ENCODE measurements at regions of chr4 and their contacts with region 1.

Region 1: GRCh38 chr4:6783053-6783981 is 790 bp downstream of the KIAA0232 start:
- DNase-seq: peak; percentile 59 to 91
- H3K4me3 ChIP-seq: peak overlapping the region; percentile 94
- H3K27ac ChIP-seq: peak overlapping the region; percentile 75
- H3K4me1 ChIP-seq: peaks cover 41% of the 10 kb centered on the region
- H3K27me3 ChIP-seq: no peaks in the 10 kb centered on the region
- CTCF ChIP-seq: no peak

Region 2: GRCh38 chr4:5051278-5052203 is 1731.8 kb before region 1 on chr4 and contains the start of gene STK32B:
- CTCF ChIA-PET with region 1: no interaction called
- POLR2A ChIA-PET with region 1: no interaction called
- intact Hi-C with region 1: no loop called
- DNase-seq: no peak
- H3K4me3 ChIP-seq: no peak within 1 kb of the TSS
- H3K27ac ChIP-seq: no peak within 1 kb of the TSS
- H3K4me1 ChIP-seq: no peaks in the 10 kb centered on the region
- H3K27me3 ChIP-seq: peaks cover 26% of the 10 kb centered on the region
- CTCF ChIP-seq: no peak
- total RNA-seq, gene STK32B: not detected in 2 replicates

Region 3: GRCh38 chr4:6640292-6641163 is 142.8 kb before region 1 on chr4 and contains the start of gene MRFAP1:
- CTCF ChIA-PET with region 1: no interaction called
- POLR2A ChIA-PET with region 1: no interaction called
- intact Hi-C with region 1: no loop called
- DNase-seq: peak; percentile 83 to 91
- H3K4me3 ChIP-seq: peak within 1 kb of the TSS; percentile 78
- H3K27ac ChIP-seq: peak within 1 kb of the TSS; percentile 80
- H3K4me1 ChIP-seq: peaks cover 12% of the 10 kb centered on the region
- H3K27me3 ChIP-seq: no peaks in the 10 kb centered on the region
- CTCF ChIP-seq: no peak
- total RNA-seq, gene MRFAP1: 278 and 291 TPM in 2 replicates

Region 4: DNA sequence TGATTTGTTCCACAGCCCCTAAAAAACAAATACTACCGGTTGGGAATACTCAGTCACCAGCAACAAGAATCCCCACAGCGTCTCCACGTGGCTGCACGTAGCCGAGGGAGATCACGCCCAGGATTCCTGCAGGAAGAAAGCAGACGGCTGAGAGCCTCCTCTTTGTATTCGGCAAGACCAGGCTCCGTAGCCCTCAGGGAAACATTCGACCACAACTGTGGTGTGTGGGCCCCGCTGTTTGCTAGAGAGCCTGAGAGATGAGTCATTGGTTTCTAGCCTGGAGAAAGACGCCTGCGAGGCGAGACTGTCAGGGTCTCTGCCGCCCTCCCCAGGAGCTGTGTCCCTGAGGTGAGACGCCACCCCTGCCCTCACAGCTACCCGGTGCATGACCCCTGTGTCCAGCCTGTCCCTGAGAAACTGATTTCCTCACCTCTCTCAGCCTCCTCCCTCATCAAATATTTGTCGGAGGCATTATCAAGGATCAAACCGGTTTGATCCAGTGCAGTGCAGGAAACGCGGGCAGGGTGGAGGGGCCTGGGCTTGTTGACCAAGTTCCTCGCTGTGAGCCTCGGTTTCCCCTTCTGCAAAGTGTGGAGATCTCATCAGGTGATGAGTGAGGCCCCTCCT is 94.3 kb before region 1 on chr4:
- CTCF ChIA-PET with region 1: no interaction called
- POLR2A ChIA-PET with region 1: no interaction called
- intact Hi-C with region 1: loop called (anchors 1 kb)
- DNase-seq: peak; percentile 94 to 98
- H3K4me3 ChIP-seq: peak overlapping the region; percentile 46; the same call in 1 of the 2 replicates
- H3K27ac ChIP-seq: peak overlapping the region; percentile 100
- H3K4me1 ChIP-seq: peaks cover 56% of the 10 kb centered on the region
- H3K27me3 ChIP-seq: no peaks in the 10 kb centered on the region
- CTCF ChIP-seq: no peak

Region 5: GRCh38 chr4:6749341-6750171 is 33.8 kb before region 1 on chr4:
- CTCF ChIA-PET with region 1: no interaction called
- POLR2A ChIA-PET with region 1: no interaction called
- intact Hi-C with region 1: loop called (anchors 1 kb)
- DNase-seq: peak; percentile 91 to 93
- H3K4me3 ChIP-seq: peak overlapping the region; percentile 35; the same call in 1 of the 2 replicates
- H3K27ac ChIP-seq: peak overlapping the region; percentile 96
- H3K4me1 ChIP-seq: peaks cover 78% of the 10 kb centered on the region
- H3K27me3 ChIP-seq: no peaks in the 10 kb centered on the region
- CTCF ChIP-seq: no peak

Region 6: DNA sequence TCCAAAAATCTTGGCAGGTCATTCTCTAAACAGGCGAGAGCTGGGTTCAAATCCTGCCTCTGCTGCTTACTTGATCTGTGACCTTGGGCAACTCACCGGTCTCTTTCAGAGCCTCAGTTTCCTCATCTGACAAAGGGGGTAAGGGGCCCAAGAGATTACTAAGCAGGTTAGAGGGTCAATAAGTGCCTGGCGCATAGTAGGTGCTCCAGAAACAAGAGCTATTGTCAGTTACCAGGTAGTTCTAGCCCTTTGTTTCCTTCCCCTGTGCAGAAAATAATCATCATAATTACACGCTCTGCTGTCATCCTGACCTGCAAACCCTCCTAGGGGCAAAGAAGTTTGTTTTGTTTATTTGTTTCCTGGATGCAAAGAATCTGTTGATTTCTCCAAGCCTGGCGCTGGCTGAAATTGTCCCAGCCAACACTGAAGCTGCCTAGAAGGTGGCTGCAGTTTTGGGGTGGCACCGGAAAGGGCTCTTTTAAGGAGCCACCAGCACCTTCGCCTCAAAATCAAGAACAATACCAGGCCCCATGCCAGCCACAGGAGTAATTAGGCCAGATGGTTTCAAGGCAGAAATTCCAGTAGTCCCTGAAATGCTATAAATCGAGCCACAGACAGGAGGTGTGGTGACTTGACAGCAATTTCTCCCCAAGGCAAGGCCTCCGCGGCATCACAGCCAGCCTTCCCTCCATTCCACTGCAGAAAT is 10.9 kb before region 1 on chr4:
- CTCF ChIA-PET with region 1: interaction called, 4 read pairs
- POLR2A ChIA-PET with region 1: interaction called, 3 read pairs
- intact Hi-C with region 1: loop called (anchors 1 kb)
- DNase-seq: peak; percentile 77 to 89
- H3K4me3 ChIP-seq: no peak overlapping the region
- H3K27ac ChIP-seq: peak overlapping the region; percentile 81
- H3K4me1 ChIP-seq: peaks cover 71% of the 10 kb centered on the region
- H3K27me3 ChIP-seq: no peaks in the 10 kb centered on the region
- CTCF ChIP-seq: no peak

Region 7: GRCh38 chr4:6802025-6802424 is 18.7 kb after region 1 on chr4:
- CTCF ChIA-PET with region 1: no interaction called
- POLR2A ChIA-PET with region 1: no interaction called
- intact Hi-C with region 1: no loop called
- DNase-seq: no peak
- H3K4me3 ChIP-seq: no peak overlapping the region
- H3K27ac ChIP-seq: no peak overlapping the region
- H3K4me1 ChIP-seq: peaks cover 19% of the 10 kb centered on the region
- H3K27me3 ChIP-seq: no peaks in the 10 kb centered on the region
- CTCF ChIP-seq: no peak

Region 8: GRCh38 chr4:6840062-6840976 is 57.0 kb after region 1 on chr4:
- CTCF ChIA-PET with region 1: interaction called, 10 read pairs
- POLR2A ChIA-PET with region 1: no interaction called
- intact Hi-C with region 1: no loop called
- DNase-seq: peak; percentile 22 to 43
- H3K4me3 ChIP-seq: no peak overlapping the region
- H3K27ac ChIP-seq: peak overlapping the region; percentile 29
- H3K4me1 ChIP-seq: peaks cover 13% of the 10 kb centered on the region
- H3K27me3 ChIP-seq: no peaks in the 10 kb centered on the region
- CTCF ChIP-seq: no peak

Region 9: GRCh38 chr4:6873792-6874461 is 90.6 kb after region 1 on chr4:
- CTCF ChIA-PET with region 1: interaction called, 3 read pairs
- POLR2A ChIA-PET with region 1: no interaction called
- intact Hi-C with region 1: loop called (anchors 5 kb)
- DNase-seq: peak in 1 of 2 experiments; percentile 58
- H3K4me3 ChIP-seq: no peak overlapping the region
- H3K27ac ChIP-seq: no peak overlapping the region
- H3K4me1 ChIP-seq: no peaks in the 10 kb centered on the region
- H3K27me3 ChIP-seq: no peaks in the 10 kb centered on the region
- CTCF ChIP-seq: peak; percentile 79

Region 10: GRCh38 chr4:7067452-7068278 is 284.3 kb after region 1 on chr4 and contains the start of gene GRPEL1:
- CTCF ChIA-PET with region 1: no interaction called
- POLR2A ChIA-PET with region 1: no interaction called
- intact Hi-C with region 1: loop called (anchors 5 kb)
- DNase-seq: peak; percentile 96 to 99
- H3K4me3 ChIP-seq: peak within 1 kb of the TSS; percentile 90
- H3K27ac ChIP-seq: peak within 1 kb of the TSS; percentile 63
- H3K4me1 ChIP-seq: peaks cover 13% of the 10 kb centered on the region
- H3K27me3 ChIP-seq: no peaks in the 10 kb centered on the region
- CTCF ChIP-seq: no peak
- total RNA-seq, gene GRPEL1: 49.3 and 49.9 TPM in 2 replicates

Measured in PC-9 (cell line).